GM23248 (cell line): ENCODE measurements at regions of chr5 and their contacts with region 1.

Region 1: GRCh38 chr5:127766676-127767340 is 63.6 kb downstream of the CCDC192 start:
- DNase-seq: peak; percentile 30
- H3K4me3 ChIP-seq: no peak overlapping the region
- H3K27ac ChIP-seq: no peak overlapping the region
- H3K4me1 ChIP-seq: peaks cover 4% of the 10 kb centered on the region; the same call in 1 of the 2 replicates
- H3K27me3 ChIP-seq: 0 out of 2 replicates have a peak, but pooled peaks cover 7% of the 10 kb centered on the region

Region 2: DNA sequence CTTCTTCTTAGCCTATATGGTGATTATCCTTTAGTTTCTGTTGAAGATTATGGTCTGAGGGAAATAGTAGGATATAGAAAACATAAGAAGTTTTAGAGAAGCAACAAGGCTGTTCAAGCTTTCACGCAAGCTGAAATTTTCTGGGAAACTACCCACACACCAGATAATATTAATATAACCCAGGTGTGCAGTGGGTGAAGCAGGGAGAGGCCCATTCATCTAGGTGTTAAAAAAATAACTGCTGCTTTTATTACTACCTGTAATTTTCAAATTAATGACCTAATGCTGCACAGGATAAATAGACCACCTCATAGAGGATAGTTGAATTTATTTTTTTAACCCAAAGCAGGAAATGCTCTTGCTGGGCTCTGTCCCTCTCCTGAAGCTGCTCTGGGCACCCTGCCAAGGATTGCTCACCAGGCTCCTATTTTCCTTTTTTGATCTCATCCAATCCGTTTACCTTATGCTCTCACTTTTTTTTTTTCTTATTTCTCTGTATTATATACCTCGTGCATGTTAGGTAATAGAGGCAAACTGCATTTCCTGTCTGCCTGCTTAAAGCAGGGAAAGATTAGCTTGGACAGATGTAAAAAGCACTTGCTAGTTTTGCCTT is 192.4 kb after region 1 on chr5:
- in situ Hi-C with region 1: no loop called
- DNase-seq: peak; percentile 81
- H3K4me3 ChIP-seq: no peak overlapping the region
- H3K27ac ChIP-seq: no peak overlapping the region
- H3K4me1 ChIP-seq: peaks cover 15% of the 10 kb centered on the region
- H3K27me3 ChIP-seq: no peaks in the 10 kb centered on the region

Region 3: DNA sequence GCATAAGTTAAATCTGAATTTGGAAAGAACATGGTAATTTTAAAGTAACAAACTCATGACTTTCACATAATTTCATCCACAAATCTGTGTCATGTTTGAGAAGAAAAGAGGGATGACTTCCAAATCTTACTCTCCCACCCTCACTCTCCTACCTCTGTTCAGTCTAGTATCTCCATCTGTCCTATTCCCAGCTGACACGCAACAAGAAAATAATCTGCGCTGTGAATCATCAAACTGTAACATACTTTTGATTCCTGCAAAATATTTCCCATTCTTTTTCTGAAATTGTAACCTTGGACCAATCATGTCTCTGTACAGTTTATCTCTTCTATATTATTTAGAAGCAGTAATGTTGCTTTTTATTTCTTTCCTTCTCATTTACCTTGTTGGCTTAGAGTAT is 408.1 kb after region 1 on chr5:
- in situ Hi-C with region 1: loop called (anchors 10 kb)
- DNase-seq: peak; percentile 7
- H3K4me3 ChIP-seq: no peak overlapping the region
- H3K27ac ChIP-seq: no peak overlapping the region
- H3K4me1 ChIP-seq: no peaks in the 10 kb centered on the region
- H3K27me3 ChIP-seq: no peaks in the 10 kb centered on the region